ENCODE measurements at regions of chr6 and their contacts with region 1.

Region 1: DNA sequence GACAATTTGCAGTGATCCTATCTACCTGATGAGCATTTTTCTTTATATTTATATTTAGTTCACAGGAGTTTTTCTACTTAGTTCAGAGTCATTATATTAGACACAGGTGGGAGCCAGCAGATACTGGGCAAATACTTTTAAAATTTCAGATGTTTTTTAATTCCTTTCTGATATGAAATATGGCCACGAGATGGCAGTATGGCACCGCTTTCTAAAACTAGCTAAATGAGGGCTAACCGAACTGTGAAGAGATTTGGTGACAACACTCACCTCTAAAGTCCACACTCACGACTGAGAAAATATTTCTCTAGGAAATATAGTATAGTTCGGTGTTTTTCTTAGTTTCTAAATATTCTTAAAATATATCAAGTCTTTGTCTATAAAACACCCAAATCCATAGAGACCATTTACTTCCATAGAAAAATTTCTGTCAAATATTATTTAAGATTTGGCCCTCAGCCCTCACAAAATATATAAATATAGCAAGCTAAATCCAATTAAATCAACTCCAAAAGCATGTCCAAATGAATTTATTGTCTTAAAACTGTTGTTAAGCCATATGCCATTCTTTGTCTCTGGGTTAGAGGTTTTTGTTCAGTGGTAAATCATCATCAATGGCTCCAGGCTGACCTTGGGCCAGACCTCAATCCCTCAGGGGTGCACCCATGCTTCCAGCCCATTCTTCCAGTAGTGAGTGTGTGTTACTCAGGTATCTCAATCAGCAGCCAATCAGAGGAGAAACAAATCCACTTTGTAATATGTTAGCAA is 63.6 kb downstream of the HUS1B start:
- DNase-seq: peak; percentile 69
- CTCF ChIP-seq: peak; percentile 48

Region 2: GRCh38 chr6:797479-798077 is 204.3 kb after region 1 on chr6:
- in situ Hi-C with region 1: loop called (anchors 10 kb)
- DNase-seq: peak; percentile 55
- CTCF ChIP-seq: peak; percentile 51

Region 3: GRCh38 chr6:894274-894673 is 301.0 kb after region 1 on chr6:
- in situ Hi-C with region 1: loop called (anchors 25 kb)
- DNase-seq: no peak
- CTCF ChIP-seq: peak; percentile 20

Region 4: GRCh38 chr6:1396952-1397868 is 803.9 kb after region 1 on chr6:
- in situ Hi-C with region 1: loop called (anchors 25 kb)
- DNase-seq: peak; percentile 87
- CTCF ChIP-seq: peak; percentile 89

Measured in GM13976 (cell line).